Endothelial cell of umbilical vein (primary cell): ENCODE measurements at regions of chr19 and their contacts with region 1.

Region 1: GRCh38 chr19:32570081-32570785 is 10.8 kb upstream of the PDCD5 start:
- DNase-seq: peak; percentile 37
- H3K4me3 ChIP-seq: no peak overlapping the region
- H3K27ac ChIP-seq: no peak overlapping the region
- H3K4me1 ChIP-seq: no peaks in the 10 kb centered on the region
- H3K27me3 ChIP-seq: no peaks in the 10 kb centered on the region
- CTCF ChIP-seq: peak; percentile 44 to 63
- POLR2A ChIP-seq: no peak

Region 2: GRCh38 chr19:30682999-30683536 is 1887.2 kb before region 1 on chr19:
- CTCF ChIA-PET with region 1: interaction called, 17 read pairs
- POLR2A ChIA-PET with region 1: no interaction called
- dilution Hi-C with region 1: no loop called
- intact Hi-C with region 1: loop called (anchors 2 kb)
- DNase-seq: peak; percentile 83
- H3K4me3 ChIP-seq: no peak overlapping the region
- H3K27ac ChIP-seq: no peak overlapping the region
- H3K4me1 ChIP-seq: peaks cover 4% of the 10 kb centered on the region
- H3K27me3 ChIP-seq: no peaks in the 10 kb centered on the region
- CTCF ChIP-seq: peak; percentile 78 to 94
- POLR2A ChIP-seq: no peak

Region 3: GRCh38 chr19:32224371-32225244 is 345.6 kb before region 1 on chr19:
- CTCF ChIA-PET with region 1: interaction called, 3 read pairs
- POLR2A ChIA-PET with region 1: no interaction called
- dilution Hi-C with region 1: no loop called
- intact Hi-C with region 1: loop called (anchors 2 kb)
- DNase-seq: peak; percentile 47
- H3K4me3 ChIP-seq: no peak overlapping the region
- H3K27ac ChIP-seq: no peak overlapping the region
- H3K4me1 ChIP-seq: no peaks in the 10 kb centered on the region
- H3K27me3 ChIP-seq: peaks cover 0 to 7% of the 10 kb centered on the region in 2 experiments
- CTCF ChIP-seq: peak; percentile 91 to 96
- POLR2A ChIP-seq: no peak

Region 4: DNA sequence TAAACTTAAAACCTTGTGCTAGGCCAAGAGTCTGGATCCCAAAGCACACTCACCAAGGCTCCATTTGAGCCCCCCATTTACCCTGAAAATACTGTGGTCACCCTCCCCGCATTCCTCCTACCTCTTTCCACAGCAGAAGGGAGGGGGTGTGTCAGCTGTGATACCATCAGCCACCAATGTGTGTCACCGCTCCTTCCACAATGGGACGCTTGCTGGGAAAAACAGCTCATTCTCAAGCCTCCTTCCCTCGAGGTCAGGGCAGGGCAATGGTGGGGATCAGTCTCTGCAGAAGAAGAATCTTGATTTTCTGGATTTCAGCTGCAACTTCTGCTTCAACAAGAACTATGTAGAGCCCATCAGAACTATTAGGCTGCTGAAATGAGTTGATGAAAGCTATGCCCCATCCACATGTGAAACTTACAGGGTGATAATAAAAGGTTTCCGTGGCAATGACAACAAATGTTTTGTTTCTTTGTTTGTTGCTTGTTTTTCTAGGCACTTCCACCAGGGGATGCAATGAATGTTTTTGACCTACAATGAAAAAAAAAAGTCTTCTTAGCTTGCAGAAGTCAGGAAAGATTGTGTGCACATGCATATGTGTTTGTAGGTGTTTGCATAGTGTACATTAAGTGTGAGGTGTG is 251.2 kb before region 1 on chr19:
- CTCF ChIA-PET with region 1: interaction called, 6 read pairs
- POLR2A ChIA-PET with region 1: no interaction called
- dilution Hi-C with region 1: no loop called
- intact Hi-C with region 1: loop called (anchors 1 kb)
- DNase-seq: no peak
- H3K4me3 ChIP-seq: no peak overlapping the region
- H3K27ac ChIP-seq: no peak overlapping the region
- H3K4me1 ChIP-seq: no peaks in the 10 kb centered on the region
- H3K27me3 ChIP-seq: no peaks in the 10 kb centered on the region
- CTCF ChIP-seq: peak in 1 of 2 donors; percentile 12
- POLR2A ChIP-seq: no peak

Region 5: DNA sequence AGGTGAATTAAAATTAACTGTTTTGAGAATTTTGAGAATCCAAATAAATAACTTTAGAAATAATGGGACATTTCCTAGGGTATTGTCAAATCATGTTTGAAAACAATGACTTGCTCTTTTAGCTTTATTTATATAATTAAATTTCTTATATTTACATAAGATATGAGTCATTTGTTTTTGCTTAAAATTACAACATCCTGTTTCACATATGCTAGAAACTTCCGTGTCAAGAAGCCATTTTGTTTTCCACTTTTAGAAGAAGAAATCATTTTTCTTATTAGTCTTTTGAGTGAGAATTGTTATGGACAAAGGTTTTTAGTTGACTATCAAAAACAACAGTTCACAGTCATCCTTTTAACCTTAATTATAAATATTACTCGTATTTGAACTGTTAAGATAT is 116.5 kb before region 1 on chr19:
- CTCF ChIA-PET with region 1: no interaction called
- POLR2A ChIA-PET with region 1: no interaction called
- dilution Hi-C with region 1: no loop called
- intact Hi-C with region 1: no loop called
- DNase-seq: peak; percentile 21
- H3K4me3 ChIP-seq: no peak overlapping the region
- H3K27ac ChIP-seq: peak overlapping the region; percentile 89
- H3K4me1 ChIP-seq: peaks cover 10% of the 10 kb centered on the region
- H3K27me3 ChIP-seq: no peaks in the 10 kb centered on the region
- CTCF ChIP-seq: no peak
- POLR2A ChIP-seq: no peak

Region 6: DNA sequence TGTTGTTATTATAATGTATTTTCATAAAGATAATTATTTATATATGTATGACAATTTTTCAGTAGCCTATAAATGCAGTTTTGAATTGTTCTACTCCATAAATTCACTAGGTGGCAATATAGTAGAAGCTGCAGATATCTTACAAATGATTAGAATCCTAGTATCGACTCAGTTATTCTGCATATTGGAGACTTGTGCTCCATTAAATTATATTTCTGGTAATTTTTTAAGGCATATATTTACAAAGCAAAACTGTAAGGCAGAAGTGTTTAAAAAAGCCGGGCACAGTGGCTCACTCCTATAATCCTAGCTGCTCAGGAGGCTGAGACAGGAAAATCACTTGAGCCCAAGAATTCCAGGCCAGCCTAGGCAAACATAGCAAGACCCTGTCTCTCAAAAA is 106.0 kb before region 1 on chr19:
- CTCF ChIA-PET with region 1: interaction called, 4 read pairs
- POLR2A ChIA-PET with region 1: no interaction called
- dilution Hi-C with region 1: no loop called
- intact Hi-C with region 1: loop called (anchors 10 kb)
- DNase-seq: peak; percentile 21
- H3K4me3 ChIP-seq: no peak overlapping the region
- H3K27ac ChIP-seq: no peak overlapping the region
- H3K4me1 ChIP-seq: no peaks in the 10 kb centered on the region
- H3K27me3 ChIP-seq: no peaks in the 10 kb centered on the region
- CTCF ChIP-seq: peak; percentile 4 to 16
- POLR2A ChIP-seq: no peak

Region 7: DNA sequence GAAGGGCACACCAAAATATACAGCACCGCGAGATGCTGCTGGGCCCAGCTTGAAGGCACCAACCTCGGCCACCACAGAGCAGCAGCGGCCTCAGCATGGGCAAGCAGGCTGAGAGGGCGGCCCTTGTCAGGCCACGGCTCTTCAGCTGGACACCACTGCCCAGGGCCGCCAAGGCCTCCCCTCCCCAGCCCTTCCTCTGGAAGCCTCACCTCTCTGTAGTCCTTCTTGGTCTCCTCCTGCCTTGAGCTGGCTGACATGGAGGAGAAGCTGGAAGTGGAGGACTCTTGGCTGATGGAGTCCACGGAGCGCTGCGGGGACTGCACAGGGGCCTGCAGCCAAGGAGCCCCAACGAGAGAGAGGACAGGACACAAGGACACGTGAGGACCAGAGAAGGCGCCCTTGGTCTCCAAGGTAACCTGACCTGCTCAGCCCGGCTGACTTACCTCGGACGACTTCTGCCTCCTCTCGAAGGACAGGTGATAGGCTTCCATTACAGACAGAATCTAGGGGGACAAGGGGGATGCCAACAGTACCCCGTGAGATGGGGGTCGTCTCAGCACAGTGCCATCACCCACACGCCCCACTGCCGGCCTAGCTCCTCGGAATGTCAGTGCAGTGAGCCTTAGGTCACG is 48.9 kb after region 1 on chr19:
- CTCF ChIA-PET with region 1: no interaction called
- POLR2A ChIA-PET with region 1: no interaction called
- dilution Hi-C with region 1: no loop called
- intact Hi-C with region 1: no loop called
- DNase-seq: no peak
- H3K4me3 ChIP-seq: no peak overlapping the region
- H3K27ac ChIP-seq: no peak overlapping the region
- H3K4me1 ChIP-seq: no peaks in the 10 kb centered on the region
- H3K27me3 ChIP-seq: no peaks in the 10 kb centered on the region
- CTCF ChIP-seq: no peak
- POLR2A ChIP-seq: no peak